ENCODE measurements at regions of chr1 and their contacts with region 1.

Region 1: GRCh38 chr1:214261206-214262123 is 19.5 kb upstream of the SMYD2 start:
- DNase-seq: peak; percentile 67 to 79 (median 74)
- H3K4me3 ChIP-seq: no peak overlapping the region
- H3K4me3 Mint-ChIP-seq: peak overlapping the region in 2 of 8 donors; percentile 25 to 52
- H3K27ac ChIP-seq: no peak overlapping the region
- H3K27ac Mint-ChIP-seq: no peak overlapping the region
- H3K4me1 ChIP-seq: peaks cover 5% of the 10 kb centered on the region
- H3K4me1 Mint-ChIP-seq: peaks cover 0 to 4% (median 0%) of the 10 kb centered on the region in 4 donors
- H3K27me3 ChIP-seq: peaks cover 26% of the 10 kb centered on the region
- H3K27me3 Mint-ChIP-seq: peaks cover 44 to 48% of the 10 kb centered on the region in 2 donors

Region 2: GRCh38 chr1:213303286-213303685 is 958.2 kb before region 1 on chr1:
- CTCF ChIA-PET with region 1: no interaction called
- POLR2A ChIA-PET with region 1: no interaction called
- intact Hi-C with region 1: no loop called
- DNase-seq: no peak
- H3K4me3 ChIP-seq: no peak overlapping the region
- H3K4me3 Mint-ChIP-seq: no peak overlapping the region
- H3K27ac ChIP-seq: no peak overlapping the region
- H3K27ac Mint-ChIP-seq: no peak overlapping the region
- H3K4me1 ChIP-seq: no peaks in the 10 kb centered on the region
- H3K4me1 Mint-ChIP-seq: no peaks in the 10 kb centered on the region
- H3K27me3 ChIP-seq: no peaks in the 10 kb centered on the region
- H3K27me3 Mint-ChIP-seq: no peaks in the 10 kb centered on the region

Region 3: DNA sequence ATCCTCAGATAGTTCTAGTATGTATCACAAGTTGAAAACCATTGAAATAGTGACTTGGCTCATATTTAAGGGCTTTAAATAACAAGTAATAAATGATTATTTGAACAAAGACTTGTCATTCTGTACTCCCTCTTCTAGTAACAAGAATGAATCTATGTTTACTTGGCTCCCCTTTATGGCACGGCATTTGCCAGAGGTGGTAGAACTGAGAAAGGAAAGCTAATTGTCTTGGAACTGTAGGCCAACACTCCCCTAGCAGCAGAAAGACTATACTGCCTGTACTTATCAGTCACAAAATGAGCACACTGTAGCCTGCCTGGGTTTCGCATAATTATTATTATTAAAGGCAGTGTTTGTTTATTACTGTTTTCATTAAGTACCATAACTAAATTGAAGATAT is 10.1 kb before region 1 on chr1:
- CTCF ChIA-PET with region 1: interaction called, 31 read pairs
- POLR2A ChIA-PET with region 1: no interaction called
- intact Hi-C with region 1: no loop called
- DNase-seq: no peak
- H3K4me3 ChIP-seq: no peak overlapping the region
- H3K4me3 Mint-ChIP-seq: no peak overlapping the region
- H3K27ac ChIP-seq: no peak overlapping the region
- H3K27ac Mint-ChIP-seq: no peak overlapping the region
- H3K4me1 ChIP-seq: no peaks in the 10 kb centered on the region
- H3K4me1 Mint-ChIP-seq: no peaks in the 10 kb centered on the region
- H3K27me3 ChIP-seq: no peaks in the 10 kb centered on the region
- H3K27me3 Mint-ChIP-seq: peaks cover 15 to 25% of the 10 kb centered on the region in 2 donors

Region 4: DNA sequence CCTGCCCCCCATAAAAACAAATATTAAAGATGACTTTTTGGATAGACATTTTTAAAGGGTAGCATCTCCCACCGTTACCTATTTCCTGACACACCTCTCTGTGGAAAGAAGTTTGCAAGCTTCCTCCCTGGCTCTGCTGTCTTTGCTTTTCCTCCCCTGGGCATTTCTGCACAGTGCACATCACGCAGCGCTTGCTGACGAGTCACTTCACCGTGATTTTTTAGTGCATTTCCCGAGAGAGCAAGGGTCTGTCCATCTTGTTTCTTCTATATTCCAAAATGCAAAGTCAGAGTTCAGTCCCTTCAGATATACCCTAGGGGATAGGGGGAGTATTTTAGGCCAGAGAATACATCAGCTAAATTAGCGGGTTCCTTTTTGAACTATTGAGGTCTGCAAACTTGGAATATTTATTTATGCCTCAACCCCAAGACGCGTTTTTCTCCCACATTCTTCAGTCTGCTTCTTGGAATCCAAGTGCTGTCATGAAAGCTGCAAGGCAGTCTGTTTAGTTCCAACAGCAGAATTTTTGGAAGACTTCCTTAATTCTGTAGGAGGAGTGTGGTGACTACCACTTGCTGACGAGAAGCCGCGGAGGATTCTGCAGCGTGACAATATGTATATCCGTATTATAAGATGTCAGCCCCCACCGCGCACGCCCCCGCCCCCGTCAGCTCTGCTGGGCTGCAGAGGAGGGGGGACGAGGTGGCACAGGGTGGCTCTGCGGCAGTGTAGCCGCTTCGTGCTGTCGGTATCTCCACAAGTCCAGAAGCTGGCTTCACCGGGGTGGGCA is 41.9 kb after region 1 on chr1:
- CTCF ChIA-PET with region 1: interaction called, 26 read pairs
- POLR2A ChIA-PET with region 1: no interaction called
- intact Hi-C with region 1: no loop called
- DNase-seq: no peak
- H3K4me3 ChIP-seq: no peak overlapping the region
- H3K4me3 Mint-ChIP-seq: no peak overlapping the region
- H3K27ac ChIP-seq: no peak overlapping the region
- H3K27ac Mint-ChIP-seq: peak overlapping the region in 1 of 7 donors; percentile 58
- H3K4me1 ChIP-seq: peaks cover 13% of the 10 kb centered on the region
- H3K4me1 Mint-ChIP-seq: peaks cover 19 to 38% (median 21%) of the 10 kb centered on the region in 4 donors
- H3K27me3 ChIP-seq: no peaks in the 10 kb centered on the region
- H3K27me3 Mint-ChIP-seq: no peaks in the 10 kb centered on the region

Region 5: DNA sequence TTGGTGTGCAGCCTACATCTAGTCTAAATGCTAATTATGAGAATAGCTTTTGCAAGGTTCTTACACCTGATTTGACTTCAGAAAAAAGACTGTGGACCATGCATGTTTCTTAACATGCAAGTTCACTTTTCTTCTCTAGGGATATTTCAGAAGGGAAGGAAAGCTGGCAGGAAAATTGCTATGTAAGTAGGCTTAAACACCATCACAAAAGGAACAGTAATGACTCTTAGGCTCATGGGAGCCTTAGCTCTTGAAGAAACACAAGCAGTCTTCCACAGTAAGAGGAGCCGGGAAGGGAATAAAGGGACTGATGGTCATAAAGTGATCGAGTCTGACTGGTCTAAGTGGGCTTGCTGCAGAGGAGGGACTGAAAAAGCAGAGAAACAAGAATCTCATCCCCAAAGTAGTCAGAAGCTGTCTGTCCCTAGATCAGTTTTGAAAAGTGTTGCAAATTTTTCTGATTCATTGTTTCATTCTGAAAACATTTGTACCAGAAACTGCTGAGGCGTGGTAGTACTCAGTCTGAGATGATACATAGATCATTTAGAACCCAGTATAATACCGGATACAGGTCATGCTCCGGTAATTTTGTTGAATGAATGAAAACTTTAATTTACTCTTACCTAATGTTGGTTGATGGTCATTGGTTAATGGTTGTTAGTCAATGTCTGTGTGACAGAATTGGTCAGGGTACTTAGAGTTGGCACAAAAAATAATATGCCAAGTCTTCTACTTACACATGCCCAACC is 60.4 kb after region 1 on chr1:
- CTCF ChIA-PET with region 1: interaction called, 787 read pairs
- POLR2A ChIA-PET with region 1: no interaction called
- intact Hi-C with region 1: no loop called
- DNase-seq: no peak
- H3K4me3 ChIP-seq: no peak overlapping the region
- H3K4me3 Mint-ChIP-seq: no peak overlapping the region
- H3K27ac ChIP-seq: no peak overlapping the region
- H3K27ac Mint-ChIP-seq: peak overlapping the region in 4 of 7 donors; percentile 3 to 29 (median 8)
- H3K4me1 ChIP-seq: no peaks in the 10 kb centered on the region
- H3K4me1 Mint-ChIP-seq: peaks cover 0 to 2% (median 0%) of the 10 kb centered on the region in 4 donors
- H3K27me3 ChIP-seq: no peaks in the 10 kb centered on the region
- H3K27me3 Mint-ChIP-seq: no peaks in the 10 kb centered on the region

Region 6: DNA sequence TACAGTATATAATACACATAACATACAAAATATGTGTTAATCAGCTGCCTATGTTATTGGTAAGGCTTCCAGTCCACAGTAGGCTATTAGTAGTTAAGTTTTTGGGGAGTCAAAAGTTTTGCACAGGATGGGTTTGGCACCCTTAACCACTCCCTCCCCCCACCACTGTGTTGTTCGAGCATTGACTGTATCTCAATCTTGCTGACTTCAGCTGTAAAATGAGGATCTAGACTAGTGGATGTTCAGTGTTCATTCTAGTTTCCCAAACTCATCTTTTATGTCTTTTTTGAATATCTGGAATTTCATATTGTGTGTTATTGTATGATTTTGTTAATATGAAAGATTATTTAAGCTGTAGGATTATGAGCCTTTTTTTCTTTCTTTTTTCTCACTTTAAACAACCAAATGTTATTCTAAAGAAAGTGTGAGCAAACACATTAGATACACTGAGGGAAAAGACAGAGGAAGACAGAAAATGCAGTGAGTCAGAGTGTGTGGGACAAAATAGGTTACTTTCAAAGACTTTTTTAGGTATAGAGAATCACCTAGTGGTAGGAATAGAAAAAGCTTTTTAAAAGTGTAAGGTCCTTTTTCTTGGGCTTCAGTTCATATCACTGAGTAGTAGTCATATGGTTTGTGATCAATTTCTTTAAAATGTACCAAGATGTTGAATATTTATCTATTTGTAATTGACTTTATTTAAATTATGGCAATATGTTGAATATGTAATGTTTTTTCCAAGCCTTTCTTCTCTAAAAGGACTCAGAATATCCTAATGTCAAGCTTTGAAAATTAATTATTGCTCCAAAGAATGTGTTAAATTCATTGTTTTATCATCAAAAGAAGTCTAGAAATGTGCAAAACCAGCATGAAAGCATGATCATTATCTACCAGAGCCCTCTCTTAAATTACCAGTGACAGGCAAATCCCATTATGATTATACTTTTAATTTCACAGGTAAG is 323.6 kb after region 1 on chr1:
- CTCF ChIA-PET with region 1: interaction called, 5 read pairs
- POLR2A ChIA-PET with region 1: no interaction called
- intact Hi-C with region 1: loop called (anchors 1 kb)
- DNase-seq: no peak
- H3K4me3 ChIP-seq: no peak overlapping the region
- H3K4me3 Mint-ChIP-seq: no peak overlapping the region
- H3K27ac ChIP-seq: no peak overlapping the region
- H3K27ac Mint-ChIP-seq: no peak overlapping the region
- H3K4me1 ChIP-seq: no peaks in the 10 kb centered on the region
- H3K4me1 Mint-ChIP-seq: no peaks in the 10 kb centered on the region
- H3K27me3 ChIP-seq: no peaks in the 10 kb centered on the region
- H3K27me3 Mint-ChIP-seq: peaks cover 5 to 8% of the 10 kb centered on the region in 2 donors

Region 7: GRCh38 chr1:215290018-215290417 is 1028.6 kb after region 1 on chr1:
- CTCF ChIA-PET with region 1: no interaction called
- POLR2A ChIA-PET with region 1: no interaction called
- intact Hi-C with region 1: no loop called
- DNase-seq: no peak
- H3K4me3 ChIP-seq: no peak overlapping the region
- H3K4me3 Mint-ChIP-seq: no peak overlapping the region
- H3K27ac ChIP-seq: no peak overlapping the region
- H3K27ac Mint-ChIP-seq: no peak overlapping the region
- H3K4me1 ChIP-seq: no peaks in the 10 kb centered on the region
- H3K4me1 Mint-ChIP-seq: no peaks in the 10 kb centered on the region
- H3K27me3 ChIP-seq: no peaks in the 10 kb centered on the region
- H3K27me3 Mint-ChIP-seq: no peaks in the 10 kb centered on the region